WTC11 (cell line): ENCODE measurements at regions of chr16 and their contacts with region 1.

Region 1: DNA sequence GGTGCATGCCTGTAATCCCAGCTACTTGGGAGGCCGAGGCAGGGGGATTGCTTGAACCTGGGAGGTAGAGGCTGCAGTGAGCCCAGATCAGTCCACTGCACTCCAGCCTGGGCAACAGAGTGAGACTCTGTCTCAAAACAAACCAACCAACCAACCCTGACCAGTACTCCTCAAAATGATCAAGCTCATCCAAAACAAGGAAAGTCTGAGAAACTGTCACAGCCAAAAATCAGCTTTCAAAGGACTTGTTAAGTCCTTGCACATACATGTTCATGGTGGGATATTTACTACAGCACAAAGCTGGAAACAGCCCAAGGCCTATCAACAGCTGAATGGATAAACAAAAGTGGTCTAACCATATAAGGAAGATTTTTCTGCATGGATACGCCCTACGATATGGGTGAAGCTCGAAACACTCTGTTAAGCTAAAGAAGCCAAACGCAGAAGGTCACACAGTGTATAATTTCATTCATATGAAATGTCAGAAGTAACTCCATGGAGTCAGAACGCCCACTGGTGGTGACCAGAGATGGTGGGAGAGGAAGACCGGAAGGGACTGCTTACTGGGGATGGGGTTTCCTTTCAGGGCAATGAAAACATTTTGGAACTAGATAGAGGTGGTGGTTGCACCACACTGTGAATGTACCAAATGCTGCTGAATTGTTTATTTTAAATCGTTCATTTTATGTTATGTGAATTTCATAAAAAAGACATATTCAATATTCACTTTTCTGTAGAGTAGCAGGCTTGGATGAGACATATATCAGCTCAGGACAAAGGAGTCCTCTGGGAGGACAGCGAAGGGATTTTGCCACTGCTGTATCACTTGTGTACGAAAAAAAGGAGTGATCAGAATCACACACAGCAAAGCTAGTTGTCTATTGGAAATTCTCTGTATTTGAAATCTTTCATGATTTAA is 17.7 kb downstream of the CCL17 start:
- DNase-seq: peak; percentile 50
- ATAC-seq: peak; percentile 37
- H3K4me3 Mint-ChIP-seq: no peak overlapping the region; the same call in 1 of the 2 replicates
- H3K27ac Mint-ChIP-seq: no peak overlapping the region; the same call in 1 of the 2 replicates
- H3K4me1 Mint-ChIP-seq: peaks cover 26% of the 10 kb centered on the region
- H3K27me3 Mint-ChIP-seq: no peaks in the 10 kb centered on the region
- CTCF ChIP-seq: no peak; the same call in 1 of the 2 replicates

Region 2: DNA sequence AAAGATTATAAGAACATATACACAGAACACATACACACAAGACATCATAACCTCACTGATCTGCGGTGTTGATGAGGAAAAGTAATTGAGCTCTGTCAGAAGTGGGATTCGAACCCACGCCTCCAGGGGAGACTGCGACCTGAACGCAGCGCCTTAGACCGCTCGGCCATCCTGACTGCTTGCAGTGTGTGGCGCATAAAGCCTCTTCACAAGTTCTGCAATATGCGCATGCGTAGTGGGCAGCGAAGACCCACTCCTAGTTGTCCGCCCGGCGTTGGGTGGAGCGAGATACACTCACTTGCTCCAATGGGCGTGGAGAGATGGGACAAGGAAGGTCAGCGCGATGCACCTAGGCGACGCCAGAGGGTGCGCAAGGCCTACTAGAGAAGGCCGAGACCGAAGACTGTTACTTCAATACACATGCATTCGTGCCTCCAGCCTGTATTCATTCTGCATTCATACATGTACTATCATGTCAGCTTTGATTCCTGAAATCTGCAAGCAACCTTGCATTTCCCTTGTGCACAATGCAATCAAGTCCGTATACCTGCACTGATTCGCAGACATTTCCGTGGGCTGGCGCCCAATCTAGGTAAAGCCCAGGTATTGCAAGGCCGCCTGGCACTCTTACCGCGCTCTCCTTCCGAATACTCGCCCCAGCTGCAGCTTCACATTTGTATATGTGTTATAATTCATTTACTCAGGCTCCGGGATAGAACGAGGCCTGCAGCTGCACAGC is 121.7 kb before region 1 on chr16:
- CTCF ChIA-PET with region 1: interaction called, 259 read pairs
- POLR2A ChIA-PET with region 1: interaction called, 12 read pairs
- DNase-seq: peak; percentile 99
- ATAC-seq: peak; percentile 85
- H3K4me3 Mint-ChIP-seq: no peak overlapping the region
- H3K27ac Mint-ChIP-seq: no peak overlapping the region
- H3K4me1 Mint-ChIP-seq: peaks cover 16% of the 10 kb centered on the region
- H3K27me3 Mint-ChIP-seq: peaks cover 13% of the 10 kb centered on the region
- CTCF ChIP-seq: peak; percentile 83

Region 3: DNA sequence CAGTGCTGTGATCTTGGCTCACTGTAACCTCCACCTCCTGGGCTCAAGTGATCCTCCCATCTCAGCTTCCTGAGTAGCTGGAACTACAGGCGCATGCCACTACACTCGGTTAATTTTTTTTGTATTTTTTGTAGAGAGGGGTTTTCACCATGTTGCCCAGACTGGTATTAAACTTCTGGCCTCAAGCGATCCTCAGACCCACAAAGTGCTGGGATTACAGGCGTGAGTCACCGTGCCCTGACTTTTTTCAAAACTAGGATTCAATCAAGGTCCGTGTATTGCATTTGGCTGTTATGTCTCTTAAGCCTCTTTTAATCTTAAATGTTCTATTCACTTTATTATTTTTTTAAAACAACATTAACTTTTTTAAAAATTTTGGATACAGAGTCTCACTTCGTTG is 68.0 kb before region 1 on chr16:
- CTCF ChIA-PET with region 1: no interaction called
- POLR2A ChIA-PET with region 1: no interaction called
- DNase-seq: no peak
- ATAC-seq: no peak
- H3K4me3 Mint-ChIP-seq: no peak overlapping the region
- H3K27ac Mint-ChIP-seq: no peak overlapping the region
- H3K4me1 Mint-ChIP-seq: no peaks in the 10 kb centered on the region; the same call in 1 of the 2 replicates
- H3K27me3 Mint-ChIP-seq: no peaks in the 10 kb centered on the region; the same call in 1 of the 2 replicates
- CTCF ChIP-seq: no peak